ENCODE measurements at regions of chr1 and their contacts with region 1.

Region 1: DNA sequence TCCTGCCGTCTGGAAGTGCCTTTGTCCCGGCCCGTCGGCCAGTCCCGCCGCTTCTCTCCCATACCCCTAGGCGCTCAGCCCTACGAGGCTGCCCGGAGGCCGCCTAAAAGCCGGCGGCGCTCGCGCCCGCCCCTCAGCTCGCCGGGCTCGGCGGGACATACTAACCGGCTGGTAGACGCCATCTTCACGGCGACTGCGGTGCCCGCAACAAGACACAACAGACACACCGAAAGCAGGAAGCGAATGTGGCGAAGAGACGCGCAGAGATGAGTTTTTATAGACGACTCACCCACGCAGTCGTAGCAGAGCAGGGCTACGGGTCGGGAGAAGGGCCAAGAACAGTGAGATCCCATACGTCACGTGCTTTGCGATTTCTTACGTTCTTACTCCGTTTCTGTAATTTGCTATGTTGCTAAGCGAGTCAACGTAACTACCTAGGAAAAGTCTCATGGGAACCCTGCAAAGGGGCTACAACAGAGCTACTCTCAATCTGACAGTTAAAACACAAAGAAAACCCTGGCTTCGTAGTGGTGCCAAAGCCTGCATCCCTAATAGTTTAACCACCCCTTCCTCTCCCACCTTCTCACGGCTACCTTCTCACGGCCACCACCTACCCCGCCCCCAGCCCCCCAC is at the start of gene GTF2B:
- DNase-seq: peak; percentile 95
- H3K4me3 ChIP-seq: peak within 1 kb of the TSS; percentile 63 to 99 (median 96)
- H3K27ac ChIP-seq: peak within 1 kb of the TSS; percentile 91 to 99 (median 98)
- H3K4me1 ChIP-seq: peaks cover 11 to 31% (median 21%) of the 10 kb centered on the region in 4 donors
- H3K27me3 ChIP-seq: no peaks in the 10 kb centered on the region
- CTCF ChIP-seq: peak in 2 of 5 experiments; percentile 10 to 29
- EP300 ChIP-seq: no peak
- POLR2A ChIP-seq: peak; percentile 99
- total RNA-seq, gene GTF2B: 6.0 to 30.4 (median 22.1) TPM

Region 2: GRCh38 chr1:88683541-88684481 is 207.6 kb before region 1 on chr1 and contains the start of gene PKN2:
- in situ Hi-C with region 1: loop called in 1 of 4 experiments (anchors 25 kb)
- intact Hi-C with region 1: no loop called
- DNase-seq: peak; percentile 98
- H3K4me3 ChIP-seq: peak within 1 kb of the TSS; percentile 51 to 96 (median 75)
- H3K27ac ChIP-seq: peak within 1 kb of the TSS; percentile 93 to 99 (median 95)
- H3K4me1 ChIP-seq: peaks cover 7 to 41% (median 27%) of the 10 kb centered on the region in 4 donors
- H3K27me3 ChIP-seq: no peaks in the 10 kb centered on the region
- CTCF ChIP-seq: peak in 3 of 5 experiments; percentile 16 to 53 (median 30)
- EP300 ChIP-seq: peak; percentile 8
- POLR2A ChIP-seq: peak; percentile 96
- total RNA-seq, gene PKN2: 31.4 to 80.4 (median 64.1) TPM